ENCODE measurements at regions of chr3 and their contacts with region 1.

Region 1: GRCh38 chr3:29759411-29760225 is 478.7 kb downstream of the RBMS3 start:
- DNase-seq: peak; percentile 29
- ATAC-seq: peak; percentile 74 to 79

Region 2: DNA sequence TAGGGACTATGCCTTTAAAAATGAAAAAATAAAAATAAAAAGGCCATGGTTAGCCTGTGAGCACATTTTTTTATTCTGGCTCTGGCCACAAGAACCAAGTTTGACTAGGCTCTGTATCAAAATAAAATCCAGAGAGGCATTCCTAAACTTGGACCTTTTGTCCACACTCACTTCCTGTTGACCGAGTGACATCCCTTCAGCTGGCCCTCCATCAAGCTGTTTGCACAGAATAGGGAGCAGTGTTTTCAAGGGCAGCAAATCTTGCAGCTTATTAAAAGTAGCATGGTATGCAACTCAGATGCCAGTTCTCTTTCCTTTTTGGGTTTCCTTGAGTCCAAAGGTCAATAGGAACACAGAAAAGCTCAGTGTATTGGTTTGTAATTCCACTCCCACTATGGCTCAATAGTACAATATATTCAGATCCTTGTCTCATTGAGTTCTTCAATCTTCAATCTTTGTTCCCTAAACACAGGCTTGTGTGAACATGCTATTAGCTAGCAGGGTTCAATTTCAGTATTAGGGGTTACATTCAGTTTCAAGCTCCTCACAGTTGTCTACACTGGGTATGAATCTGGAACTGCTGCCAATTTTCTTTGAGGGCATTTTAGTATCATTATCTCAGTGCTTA is 234.2 kb before region 1 on chr3:
- intact Hi-C with region 1: loop called in 1 of 2 experiments (anchors 10 kb)
- DNase-seq: peak; percentile 58
- ATAC-seq: peak; percentile 93 to 96

Region 3: DNA sequence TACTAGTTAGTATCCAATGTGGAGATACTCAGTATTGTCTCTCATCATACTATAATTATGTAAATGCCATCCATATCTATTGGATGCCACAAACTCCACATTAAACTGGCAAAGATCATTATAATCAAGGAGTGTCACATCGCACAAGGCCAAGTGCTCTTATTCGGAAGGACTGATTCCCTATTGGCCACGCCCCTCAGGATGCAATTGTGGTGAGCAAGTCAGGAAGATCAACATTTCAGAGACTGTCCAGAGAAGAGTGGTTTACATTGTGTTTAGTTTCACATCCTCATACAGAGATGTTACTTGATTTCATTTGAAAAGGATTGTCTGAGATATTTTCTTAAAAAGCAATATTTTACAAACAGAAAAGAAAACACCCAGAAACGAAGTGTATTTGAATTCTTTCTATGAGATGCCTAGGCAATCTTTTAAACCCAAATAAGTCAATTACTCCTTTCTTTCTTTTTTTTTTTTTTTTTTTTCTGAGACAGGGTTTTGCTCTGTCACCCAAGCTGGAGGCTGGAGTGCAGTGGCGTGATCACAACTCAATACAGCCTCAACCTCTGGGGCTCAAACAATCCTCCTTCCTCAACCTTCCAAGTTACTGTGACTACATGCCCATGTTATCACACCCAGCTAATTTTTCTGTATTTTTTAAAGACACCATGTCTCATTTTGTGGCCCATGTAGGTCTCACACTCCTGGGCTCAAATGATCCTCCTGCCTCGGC is 109.6 kb before region 1 on chr3:
- intact Hi-C with region 1: loop called in 1 of 2 experiments (anchors 10 kb)
- DNase-seq: peak; percentile 45
- ATAC-seq: peak in 1 of 2 donors; percentile 31

Region 4: GRCh38 chr3:30141178-30141581 is 381.6 kb after region 1 on chr3:
- intact Hi-C with region 1: no loop called
- DNase-seq: no peak
- ATAC-seq: no peak